Spleen (tissue), 13 donors: ENCODE measurements at regions of chr14 and their contacts with region 1.

Region 1: DNA sequence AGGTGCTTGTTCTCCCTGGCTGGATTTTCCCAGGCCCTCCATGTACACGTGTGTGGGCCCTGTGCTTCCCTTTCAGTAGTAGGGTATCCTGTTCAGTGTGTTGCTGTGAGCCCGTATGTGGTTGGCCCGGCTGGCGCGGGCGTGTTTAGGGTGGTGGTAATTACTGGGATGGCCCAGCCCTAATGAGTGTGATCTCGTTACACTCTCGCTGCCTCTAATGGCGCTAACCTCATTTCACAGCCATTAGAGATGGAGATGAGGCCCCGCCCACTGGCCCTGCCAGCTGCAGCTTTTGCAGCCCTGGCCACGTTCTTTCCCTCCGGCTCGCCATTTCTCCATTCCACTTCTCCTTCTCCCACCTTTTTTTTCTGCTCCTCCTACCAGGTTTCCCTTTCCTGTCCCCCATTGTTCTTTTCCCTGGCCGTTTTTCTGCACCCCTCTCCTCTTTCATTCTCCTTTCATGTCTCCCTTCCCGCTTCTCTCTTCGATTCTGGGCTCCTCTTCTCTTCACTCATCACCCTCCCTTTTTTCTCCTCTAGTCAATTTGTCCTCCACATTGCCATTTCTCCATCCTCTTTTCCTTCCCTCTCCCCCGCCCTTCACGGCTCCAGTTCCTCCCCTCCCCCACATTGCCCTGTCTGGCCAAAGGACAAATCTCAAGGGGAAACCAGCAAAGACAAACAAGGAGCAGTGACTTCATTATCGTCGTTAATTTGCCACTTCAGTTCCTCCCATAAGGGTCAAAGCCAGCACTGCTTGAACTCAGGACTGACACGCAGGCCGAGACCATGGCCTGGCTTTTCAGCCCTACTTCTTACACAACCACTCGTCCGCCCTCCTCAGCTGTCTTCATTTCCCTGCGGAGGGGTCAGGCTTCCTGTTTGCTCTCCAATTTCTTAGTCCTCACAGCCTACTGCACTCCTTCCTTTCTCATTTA is 6.8 kb downstream of the ZFHX2 start:
- DNase-seq: peak; percentile 69
- H3K4me3 ChIP-seq: no peak overlapping the region
- H3K27ac ChIP-seq: peak overlapping the region in 5 of 8 donors; percentile 13 to 48 (median 46)
- H3K4me1 ChIP-seq: peaks cover 0 to 19% (median 6%) of the 10 kb centered on the region in 6 donors
- H3K27me3 ChIP-seq: no peaks in the 10 kb centered on the region
- CTCF ChIP-seq: no peak
- POLR2A ChIP-seq: no peak

Region 2: DNA sequence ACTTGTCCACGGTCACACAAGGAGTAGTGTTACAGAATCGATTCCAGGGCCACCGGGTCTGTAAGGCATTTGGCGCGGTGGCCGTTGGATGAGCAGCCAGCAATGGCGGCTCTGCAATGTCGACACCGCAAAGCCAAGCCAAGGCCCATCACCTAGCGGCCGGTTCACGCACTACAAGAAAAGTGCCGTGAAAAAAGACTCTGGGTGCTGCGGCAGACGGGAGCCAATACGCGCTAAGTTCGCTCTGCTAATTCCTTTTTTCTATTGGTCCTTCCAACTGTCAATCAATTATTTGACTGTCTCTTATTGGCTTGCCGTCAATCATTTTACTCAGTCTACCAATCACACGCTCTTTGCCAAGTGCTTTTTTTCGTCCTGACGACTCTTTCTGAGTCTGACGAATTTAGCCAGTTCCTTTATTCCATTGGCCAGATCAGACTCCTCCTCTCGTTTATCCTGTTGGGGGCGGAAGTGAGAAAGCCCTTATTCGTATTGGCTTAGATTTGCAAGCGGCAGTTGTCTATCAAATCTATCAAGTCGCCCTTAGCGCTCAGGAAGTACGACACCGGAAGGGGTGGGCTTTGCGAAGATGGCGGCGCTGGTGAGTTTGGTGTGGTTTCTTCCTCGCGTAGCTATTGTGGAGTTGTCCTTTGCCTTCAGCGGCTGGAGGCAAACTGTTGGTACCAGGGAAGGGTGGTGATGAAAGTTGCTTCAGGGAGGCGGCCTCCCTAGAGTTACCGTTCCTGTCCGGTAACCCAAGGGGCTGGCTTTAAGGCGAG is 75.5 kb before region 1 on chr14 and contains the start of gene NGDN:
- intact Hi-C with region 1: loop called (anchors 5 kb)
- DNase-seq: peak; percentile 95
- H3K4me3 ChIP-seq: peak within 1 kb of the TSS; percentile 83 to 98 (median 96)
- H3K27ac ChIP-seq: peak within 1 kb of the TSS; percentile 65 to 90 (median 81)
- H3K4me1 ChIP-seq: peaks cover 9 to 25% (median 10%) of the 10 kb centered on the region in 6 donors
- H3K27me3 ChIP-seq: no peaks in the 10 kb centered on the region
- CTCF ChIP-seq: peak; percentile 77 to 95 (median 91)
- POLR2A ChIP-seq: peak in 2 of 3 donors; percentile 18 to 58
- total RNA-seq, gene NGDN: 32.7 to 62.7 (median 40.0) TPM